ENCODE measurements at regions of chr9 and their contacts with region 1.

Region 1: GRCh38 chr9:35179347-35180287 is 17.8 kb downstream of the UNC13B start:
- DNase-seq: no peak
- H3K4me3 ChIP-seq: no peak overlapping the region
- H3K27ac ChIP-seq: no peak overlapping the region
- H3K4me1 ChIP-seq: no peaks in the 10 kb centered on the region
- H3K27me3 ChIP-seq: no peaks in the 10 kb centered on the region
- CTCF ChIP-seq: no peak
- POLR2A ChIP-seq: no peak

Region 2: DNA sequence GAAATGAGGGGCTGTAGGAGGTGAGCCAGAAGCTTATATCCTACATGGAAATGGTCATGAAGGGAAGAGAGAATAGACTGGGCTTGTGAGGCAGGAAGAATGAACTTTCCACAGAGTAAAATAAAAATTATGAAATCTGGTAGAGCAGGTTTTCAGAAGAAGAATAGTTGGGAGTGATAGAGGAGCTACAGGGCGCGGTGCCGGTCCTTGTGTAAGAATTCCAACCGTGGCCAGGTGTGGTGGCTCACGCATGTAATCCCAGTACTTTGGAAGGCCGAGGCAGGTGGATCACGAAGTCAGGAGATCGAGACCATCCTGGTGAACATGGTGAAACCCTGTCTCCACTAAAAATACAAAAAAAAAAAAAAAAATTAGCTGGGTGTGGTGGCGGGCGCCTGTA is 26.7 kb before region 1 on chr9:
- intact Hi-C with region 1: no loop called
- DNase-seq: no peak
- H3K4me3 ChIP-seq: no peak overlapping the region
- H3K27ac ChIP-seq: no peak overlapping the region
- H3K4me1 ChIP-seq: no peaks in the 10 kb centered on the region
- H3K27me3 ChIP-seq: no peaks in the 10 kb centered on the region
- CTCF ChIP-seq: no peak
- POLR2A ChIP-seq: no peak

Region 3: DNA sequence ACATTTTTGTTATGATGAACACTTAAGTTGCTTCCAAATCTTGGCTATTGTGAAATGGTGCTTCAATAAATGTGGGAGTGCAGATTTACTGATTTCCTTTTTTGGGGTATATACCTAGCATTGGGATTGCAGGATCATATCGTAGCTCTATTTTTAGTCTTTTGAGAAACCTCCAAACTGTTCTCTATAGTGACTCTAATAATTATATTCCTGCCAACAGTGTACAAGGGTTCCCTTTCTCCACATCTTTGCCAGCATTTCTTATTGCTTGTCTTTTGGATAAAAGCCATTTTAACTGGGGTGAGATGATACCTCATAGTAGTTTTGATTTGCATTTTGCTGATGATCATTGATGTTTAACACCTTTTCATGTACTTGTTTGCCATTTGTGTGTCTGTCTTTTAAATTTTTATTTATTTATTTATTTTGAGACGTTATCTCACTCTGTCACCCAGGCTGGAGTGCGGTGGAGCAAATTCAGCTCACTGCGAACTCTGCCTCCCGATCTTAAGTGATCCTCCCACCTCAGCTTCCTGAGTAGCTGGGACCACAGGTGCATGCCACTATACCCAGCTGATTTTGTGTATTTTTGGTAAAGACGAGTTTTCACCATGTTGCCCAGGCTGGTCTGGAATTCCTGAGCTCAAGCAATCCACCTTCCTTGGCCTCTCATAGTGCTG is 41.2 kb after region 1 on chr9:
- intact Hi-C with region 1: no loop called
- DNase-seq: no peak
- H3K4me3 ChIP-seq: no peak overlapping the region
- H3K27ac ChIP-seq: no peak overlapping the region
- H3K4me1 ChIP-seq: no peaks in the 10 kb centered on the region
- H3K27me3 ChIP-seq: no peaks in the 10 kb centered on the region
- CTCF ChIP-seq: no peak
- POLR2A ChIP-seq: no peak

Region 4: GRCh38 chr9:35277628-35278359 is 98.2 kb after region 1 on chr9:
- intact Hi-C with region 1: no loop called
- DNase-seq: no peak
- H3K4me3 ChIP-seq: no peak overlapping the region
- H3K27ac ChIP-seq: peak overlapping the region in 1 of 2 donors; percentile 29
- H3K4me1 ChIP-seq: no peaks in the 10 kb centered on the region
- H3K27me3 ChIP-seq: no peaks in the 10 kb centered on the region
- CTCF ChIP-seq: no peak
- POLR2A ChIP-seq: no peak

Region 5: DNA sequence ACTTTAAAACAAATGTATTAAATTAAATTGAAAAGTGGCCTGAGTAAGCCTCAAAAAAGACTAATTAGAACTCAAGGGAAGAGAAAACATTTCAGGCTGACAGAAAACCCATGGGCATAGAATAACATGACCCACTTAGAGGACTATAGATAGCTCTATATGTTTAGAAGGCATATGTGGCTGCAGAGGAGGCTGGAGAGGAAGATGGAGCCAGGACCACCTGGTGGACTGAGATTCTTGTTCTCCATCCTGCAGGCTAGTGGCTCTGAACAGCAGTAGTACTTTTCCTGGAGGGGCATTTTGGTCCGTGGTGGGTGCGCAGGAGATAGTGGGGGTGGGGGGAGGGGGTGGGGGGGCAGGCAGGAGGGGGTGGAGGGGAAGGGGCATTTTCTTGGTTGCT is 601.4 kb after region 1 on chr9:
- intact Hi-C with region 1: loop called (anchors 5 kb)
- DNase-seq: no peak
- H3K4me3 ChIP-seq: no peak overlapping the region
- H3K27ac ChIP-seq: no peak overlapping the region
- H3K4me1 ChIP-seq: no peaks in the 10 kb centered on the region
- H3K27me3 ChIP-seq: no peaks in the 10 kb centered on the region
- CTCF ChIP-seq: no peak
- POLR2A ChIP-seq: no peak